ENCODE measurements at regions of chr2 and their contacts with region 1.

Region 1: GRCh38 chr2:177332041-177332991 is 60.3 kb upstream of the AGPS start:
- DNase-seq: peak; percentile 63 to 74
- H3K4me3 ChIP-seq: no peak overlapping the region
- H3K4me3 Mint-ChIP-seq: no peak overlapping the region
- H3K27ac Mint-ChIP-seq: peak overlapping the region; percentile 26
- H3K4me1 ChIP-seq: peaks cover 35% of the 10 kb centered on the region
- H3K4me1 Mint-ChIP-seq: peaks cover 19% of the 10 kb centered on the region
- H3K27me3 ChIP-seq: no peaks in the 10 kb centered on the region
- H3K27me3 Mint-ChIP-seq: no peaks in the 10 kb centered on the region
- CTCF ChIP-seq: peak; percentile 66 to 69

Region 2: DNA sequence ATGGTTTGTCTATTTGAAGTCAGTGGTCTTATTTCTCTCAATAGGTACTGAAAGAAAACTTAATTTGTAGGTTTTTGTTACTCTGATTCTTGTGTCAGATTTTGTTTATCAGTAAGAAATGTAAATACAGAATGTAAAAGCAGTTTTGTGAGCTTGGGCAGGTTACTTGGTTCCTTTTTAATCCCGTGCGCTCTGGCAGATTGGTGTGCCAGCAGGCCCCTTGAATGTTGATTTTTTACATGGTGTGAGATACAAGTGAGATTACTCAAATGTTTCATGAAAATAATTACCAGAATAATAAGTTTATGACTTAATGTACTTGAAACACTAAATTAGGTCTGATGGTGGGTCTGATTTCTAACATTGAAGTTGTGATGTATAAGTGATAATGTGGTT is 106.4 kb before region 1 on chr2:
- CTCF ChIA-PET with region 1: no interaction called
- POLR2A ChIA-PET with region 1: no interaction called
- intact Hi-C with region 1: loop called (anchors 2 kb)
- DNase-seq: no peak
- H3K4me3 ChIP-seq: no peak overlapping the region
- H3K4me3 Mint-ChIP-seq: no peak overlapping the region
- H3K27ac Mint-ChIP-seq: peak overlapping the region; percentile 74
- H3K4me1 ChIP-seq: peaks cover 3% of the 10 kb centered on the region; the same call in 1 of the 2 replicates
- H3K4me1 Mint-ChIP-seq: peaks cover 5% of the 10 kb centered on the region
- H3K27me3 ChIP-seq: no peaks in the 10 kb centered on the region
- H3K27me3 Mint-ChIP-seq: no peaks in the 10 kb centered on the region
- CTCF ChIP-seq: no peak

Region 3: DNA sequence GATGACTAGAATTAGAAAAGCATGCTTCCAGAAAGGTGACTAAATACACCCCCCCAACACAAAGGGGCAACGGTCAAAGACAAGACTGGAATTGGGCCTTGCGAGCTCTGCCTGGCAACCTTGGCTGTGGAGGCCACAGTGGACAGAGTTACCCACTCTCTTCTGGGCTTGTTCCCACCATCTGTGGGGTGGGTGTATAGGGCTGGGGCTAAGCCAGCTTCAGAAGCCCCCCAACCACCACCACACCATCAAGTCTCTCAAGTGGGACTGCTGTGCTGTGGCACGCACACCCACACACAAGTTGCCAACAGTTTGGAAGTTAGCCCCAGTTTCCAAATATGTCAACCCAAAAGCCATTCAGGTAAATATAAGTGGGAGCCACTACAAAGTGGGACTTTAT is 75.6 kb before region 1 on chr2:
- CTCF ChIA-PET with region 1: no interaction called
- POLR2A ChIA-PET with region 1: no interaction called
- intact Hi-C with region 1: no loop called
- DNase-seq: no peak
- H3K4me3 ChIP-seq: no peak overlapping the region
- H3K4me3 Mint-ChIP-seq: peak overlapping the region; percentile 28
- H3K27ac Mint-ChIP-seq: no peak overlapping the region
- H3K4me1 ChIP-seq: peaks cover 66% of the 10 kb centered on the region
- H3K4me1 Mint-ChIP-seq: peaks cover 39% of the 10 kb centered on the region
- H3K27me3 ChIP-seq: no peaks in the 10 kb centered on the region
- H3K27me3 Mint-ChIP-seq: no peaks in the 10 kb centered on the region
- CTCF ChIP-seq: no peak

Region 4: DNA sequence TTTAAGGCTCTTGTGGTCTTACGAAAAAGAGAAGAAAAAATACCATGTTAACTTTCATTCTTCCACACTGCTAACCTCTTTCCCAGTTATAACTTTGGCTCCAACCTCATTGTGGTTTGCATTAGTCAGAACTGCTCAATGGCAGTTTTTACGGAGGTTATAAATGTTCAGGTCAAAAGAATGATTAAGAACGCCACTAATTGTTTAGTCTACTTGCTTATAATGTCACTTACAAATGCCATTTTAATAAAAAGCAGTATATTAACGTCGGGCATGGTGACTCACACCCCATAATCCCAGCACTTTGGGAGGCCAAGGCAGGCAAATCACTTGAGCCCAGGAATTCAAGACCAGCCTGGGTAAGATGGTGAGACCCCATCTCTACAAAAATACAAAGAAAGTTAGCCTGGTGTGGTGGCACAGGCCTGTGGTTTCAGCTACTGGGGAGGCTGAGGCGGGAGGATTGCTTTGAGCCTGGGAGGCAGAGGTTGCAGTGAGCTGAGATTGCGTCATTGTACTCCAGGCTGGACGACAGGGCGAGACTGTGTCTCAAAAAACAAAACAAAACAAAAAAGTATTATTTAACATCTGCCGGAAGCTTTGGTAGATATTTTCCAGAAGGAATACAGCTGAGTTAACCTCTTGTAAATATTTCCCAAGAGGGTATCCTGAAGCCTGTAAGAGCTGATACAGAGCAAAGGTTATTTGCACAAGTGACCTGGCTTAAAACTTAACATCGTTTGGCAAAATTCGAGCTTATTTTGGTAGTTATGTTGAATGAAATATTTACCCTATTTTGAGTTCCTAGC is 65.4 kb after region 1 on chr2:
- CTCF ChIA-PET with region 1: no interaction called
- POLR2A ChIA-PET with region 1: no interaction called
- intact Hi-C with region 1: loop called (anchors 5 kb)
- DNase-seq: peak; percentile 60 to 63
- H3K4me3 ChIP-seq: no peak overlapping the region
- H3K4me3 Mint-ChIP-seq: peak overlapping the region; percentile 10
- H3K27ac Mint-ChIP-seq: peak overlapping the region; percentile 58
- H3K4me1 ChIP-seq: peaks cover 60% of the 10 kb centered on the region
- H3K4me1 Mint-ChIP-seq: peaks cover 34% of the 10 kb centered on the region
- H3K27me3 ChIP-seq: no peaks in the 10 kb centered on the region
- H3K27me3 Mint-ChIP-seq: no peaks in the 10 kb centered on the region
- CTCF ChIP-seq: no peak

Region 5: DNA sequence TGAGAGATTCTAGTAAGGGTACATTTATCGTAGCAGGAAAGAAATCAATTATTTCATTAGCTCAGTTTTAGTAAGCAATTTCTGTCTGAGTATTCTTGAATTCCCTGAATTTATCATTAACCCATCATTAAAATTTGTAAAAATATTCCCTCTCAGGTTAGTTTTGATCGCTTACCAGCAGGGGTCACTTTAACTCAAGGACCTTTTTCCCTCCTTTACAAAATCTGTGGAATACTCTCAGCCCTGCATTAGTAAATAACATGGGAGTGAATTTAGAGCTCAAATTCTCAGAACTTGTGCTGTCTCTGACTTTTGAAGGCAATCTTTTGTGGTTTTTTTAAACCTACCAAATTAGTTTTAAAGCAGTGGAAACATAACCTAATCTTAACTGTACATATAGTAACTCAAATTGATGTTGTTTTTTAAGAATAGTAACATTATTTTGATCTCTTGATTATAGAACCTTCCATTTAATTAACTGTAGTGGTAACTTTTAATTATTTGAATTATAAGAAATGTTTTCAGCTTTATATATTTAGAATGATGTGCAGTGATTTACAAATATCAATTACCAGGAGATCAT is 157.5 kb after region 1 on chr2:
- CTCF ChIA-PET with region 1: no interaction called
- POLR2A ChIA-PET with region 1: no interaction called
- intact Hi-C with region 1: loop called (anchors 5 kb)
- DNase-seq: peak in 1 of 2 experiments; percentile 40
- H3K4me3 ChIP-seq: no peak overlapping the region
- H3K4me3 Mint-ChIP-seq: no peak overlapping the region
- H3K27ac Mint-ChIP-seq: no peak overlapping the region
- H3K4me1 ChIP-seq: 0 out of 2 replicates have a peak, but pooled peaks cover 3% of the 10 kb centered on the region
- H3K4me1 Mint-ChIP-seq: no peaks in the 10 kb centered on the region
- H3K27me3 ChIP-seq: no peaks in the 10 kb centered on the region
- H3K27me3 Mint-ChIP-seq: no peaks in the 10 kb centered on the region
- CTCF ChIP-seq: peak; percentile 60 to 69

Region 6: DNA sequence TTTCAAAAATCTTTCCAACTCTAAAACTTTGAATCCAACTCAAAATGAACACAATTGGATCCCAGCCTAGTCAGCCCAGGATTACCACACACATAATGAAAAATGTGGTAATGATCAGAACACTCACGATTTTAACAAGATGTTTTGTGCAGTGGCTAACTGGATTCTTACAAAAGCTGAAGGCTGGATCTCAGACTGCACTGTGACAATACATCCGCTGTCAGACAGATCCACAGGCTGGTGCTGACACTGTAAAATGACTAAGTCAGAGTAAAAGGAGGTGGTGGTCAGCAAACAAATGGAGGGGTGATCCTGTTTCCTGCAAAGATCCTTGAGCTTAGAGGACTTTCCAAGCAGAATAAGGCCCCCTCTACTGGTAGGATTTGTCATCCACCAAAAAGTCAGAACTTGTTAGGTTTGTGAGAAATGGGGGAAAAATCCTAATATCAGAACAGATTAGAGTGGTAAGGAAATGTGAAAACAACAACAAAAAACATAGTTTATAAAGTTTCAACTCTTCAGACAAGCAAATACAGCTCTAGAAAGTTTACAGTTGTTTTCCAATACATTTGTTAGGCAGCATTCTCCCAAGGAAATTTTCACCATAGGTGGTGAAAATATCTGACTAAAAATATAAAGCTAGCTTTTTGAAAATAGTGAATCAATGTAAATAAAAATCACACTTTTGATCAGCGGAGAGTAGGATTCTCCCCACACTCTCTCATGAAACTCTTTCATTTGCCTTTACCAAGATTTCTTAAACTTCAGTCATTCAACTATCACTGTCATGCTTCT is 272.2 kb after region 1 on chr2:
- CTCF ChIA-PET with region 1: interaction called, 7 read pairs
- POLR2A ChIA-PET with region 1: no interaction called
- intact Hi-C with region 1: loop called (anchors 1 kb)
- DNase-seq: peak; percentile 42 to 64
- H3K4me3 ChIP-seq: no peak overlapping the region
- H3K4me3 Mint-ChIP-seq: no peak overlapping the region
- H3K27ac Mint-ChIP-seq: no peak overlapping the region
- H3K4me1 ChIP-seq: peaks cover 22% of the 10 kb centered on the region
- H3K4me1 Mint-ChIP-seq: peaks cover 20% of the 10 kb centered on the region
- H3K27me3 ChIP-seq: no peaks in the 10 kb centered on the region
- H3K27me3 Mint-ChIP-seq: no peaks in the 10 kb centered on the region
- CTCF ChIP-seq: peak; percentile 68 to 76

Region 7: GRCh38 chr2:177758591-177759371 is 426.5 kb after region 1 on chr2:
- CTCF ChIA-PET with region 1: no interaction called
- POLR2A ChIA-PET with region 1: no interaction called
- intact Hi-C with region 1: loop called (anchors 1 kb)
- DNase-seq: peak in 1 of 2 experiments; percentile 60
- H3K4me3 ChIP-seq: no peak overlapping the region
- H3K4me3 Mint-ChIP-seq: no peak overlapping the region
- H3K27ac Mint-ChIP-seq: no peak overlapping the region
- H3K4me1 ChIP-seq: peaks cover 12% of the 10 kb centered on the region
- H3K4me1 Mint-ChIP-seq: peaks cover 9% of the 10 kb centered on the region
- H3K27me3 ChIP-seq: no peaks in the 10 kb centered on the region; the same call in 1 of the 2 replicates
- H3K27me3 Mint-ChIP-seq: peaks cover 12% of the 10 kb centered on the region
- CTCF ChIP-seq: peak; percentile 54 to 65